Dorsolateral prefrontal cortex (tissue), 120 donors: ENCODE measurements at regions of chr6 and their contacts with region 1.

Region 1: GRCh38 chr6:124870611-124871459 is 91.4 kb upstream of the RNF217 start:
- DNase-seq: no peak
- H3K4me3 ChIP-seq: no peak overlapping the region
- H3K27ac ChIP-seq: no peak overlapping the region
- H3K27me3 ChIP-seq: no peaks in the 10 kb centered on the region
- CTCF ChIP-seq: peak; percentile 59 to 91 (median 78)

Region 2: DNA sequence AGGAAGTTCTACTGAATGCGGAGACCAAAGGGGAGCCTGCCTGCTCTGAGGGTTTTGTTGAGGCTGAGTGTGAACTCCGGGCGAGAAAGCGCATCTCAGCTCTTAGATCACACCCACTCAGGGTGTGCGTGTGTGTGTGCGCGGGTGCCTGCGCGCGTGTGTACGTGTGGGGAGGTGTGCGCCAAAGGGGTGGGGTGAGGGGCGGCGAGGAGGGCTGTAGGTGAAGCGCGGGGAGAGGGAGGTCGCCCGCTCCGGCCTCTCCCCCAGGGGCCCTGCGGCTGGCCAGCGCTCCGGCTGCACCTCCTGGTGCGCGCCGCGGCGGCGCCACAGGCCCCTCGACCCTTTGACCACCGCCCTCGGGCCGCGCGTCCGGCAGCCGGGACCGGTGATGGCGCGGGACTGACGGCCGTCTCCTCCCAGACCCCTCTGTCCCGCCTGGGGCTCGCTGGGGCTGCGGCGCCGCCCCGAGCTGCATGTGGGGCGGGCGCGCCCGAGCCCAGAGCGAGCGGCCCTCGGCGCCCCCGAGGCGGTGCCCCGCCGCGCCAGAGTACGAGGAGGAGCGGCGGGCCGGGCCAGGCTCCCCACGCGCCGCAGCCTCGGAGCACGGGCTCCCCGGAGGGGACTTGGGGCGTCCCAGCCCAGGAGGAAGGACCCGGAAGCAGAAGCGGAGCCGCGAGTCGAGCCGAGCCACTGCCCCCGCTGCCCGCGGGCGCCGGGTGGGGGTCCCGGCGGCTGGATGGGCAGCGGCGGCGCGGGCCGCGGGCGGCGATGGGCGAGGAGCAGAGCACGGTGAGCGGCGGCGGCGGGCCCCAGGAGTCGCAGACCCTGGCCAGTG is 91.2 kb after region 1 on chr6 and contains the start of gene RNF217:
- intact Hi-C with region 1: loop called in 1 of 2 experiments (anchors 5 kb)
- DNase-seq: peak; percentile 28 to 71 (median 56)
- H3K4me3 ChIP-seq: peak within 1 kb of the TSS; percentile 70 to 93 (median 84)
- H3K27ac ChIP-seq: peak within 1 kb of the TSS; percentile 69 to 96 (median 89)
- H3K27me3 ChIP-seq: no peaks in the 10 kb centered on the region
- CTCF ChIP-seq: peak in 5 of 56 donors; percentile 11 to 23 (median 17)
- total RNA-seq, gene RNF217: 13.2 to 35.6 (median 22.1) TPM

Region 3: GRCh38 chr6:125114248-125114858 is 243.5 kb after region 1 on chr6:
- intact Hi-C with region 1: loop called (anchors 2 to 5 kb)
- DNase-seq: peak in 3 of 10 donors; percentile 37 to 83 (median 75)
- H3K4me3 ChIP-seq: peak overlapping the region in 26 of 59 donors; percentile 9 to 49 (median 33)
- H3K27ac ChIP-seq: peak overlapping the region in 3 of 59 donors; percentile 5 to 29 (median 8)
- H3K27me3 ChIP-seq: no peaks in the 10 kb centered on the region
- CTCF ChIP-seq: peak; percentile 68 to 100 (median 90)

Region 4: GRCh38 chr6:125301435-125302391 is 430.9 kb after region 1 on chr6 and contains the start of gene HDDC2:
- intact Hi-C with region 1: loop called in 1 of 2 experiments (anchors 10 kb)
- DNase-seq: peak in 8 of 10 donors; percentile 17 to 73 (median 46)
- H3K4me3 ChIP-seq: peak within 1 kb of the TSS; percentile 59 to 92 (median 82)
- H3K27ac ChIP-seq: peak within 1 kb of the TSS in 57 of 59 donors; percentile 19 to 94 (median 83)
- H3K27me3 ChIP-seq: no peaks in the 10 kb centered on the region
- CTCF ChIP-seq: peak in 9 of 56 donors; percentile 8 to 36 (median 22)
- total RNA-seq, gene HDDC2: 55.3 to 170 (median 91.5) TPM

Region 5: DNA sequence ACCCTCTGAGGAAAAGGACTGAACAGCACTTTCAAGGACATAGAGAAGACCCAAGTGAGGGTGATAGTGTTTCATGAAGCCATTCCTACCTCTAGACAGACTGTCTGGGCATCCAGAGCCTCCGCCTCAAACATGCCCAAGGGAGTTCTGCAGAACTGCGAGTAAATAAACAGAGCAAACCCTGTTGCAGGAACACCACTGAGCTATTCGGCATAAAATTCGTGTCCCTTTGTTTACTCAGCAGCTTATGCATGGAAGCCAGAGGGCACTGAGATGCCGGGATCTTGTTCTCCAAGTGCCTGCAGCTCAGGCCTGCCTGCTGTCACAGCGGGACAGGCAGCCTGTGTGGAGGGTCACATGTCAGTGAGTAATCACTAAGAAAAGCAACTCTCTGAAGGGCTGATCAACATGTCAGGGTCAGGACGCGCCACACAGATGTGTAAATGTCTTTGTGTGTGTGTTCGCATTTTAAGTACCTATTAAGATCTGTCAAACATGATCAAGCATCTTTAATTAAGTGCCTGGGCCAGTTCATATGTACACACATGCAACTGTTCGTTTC is 713.7 kb after region 1 on chr6:
- intact Hi-C with region 1: loop called in 1 of 2 experiments (anchors 10 kb)
- DNase-seq: peak in 9 of 10 donors; percentile 59 to 87 (median 82)
- H3K4me3 ChIP-seq: peak overlapping the region in 10 of 59 donors; percentile 0 to 27 (median 22)
- H3K27ac ChIP-seq: peak overlapping the region in 50 of 59 donors; percentile 4 to 85 (median 58)
- H3K27me3 ChIP-seq: peaks cover 0 to 4% (median 0%) of the 10 kb centered on the region in 45 donors
- CTCF ChIP-seq: peak; percentile 24 to 82 (median 61)

Region 6: GRCh38 chr6:125764121-125764671 is 893.4 kb after region 1 on chr6:
- intact Hi-C with region 1: loop called in 1 of 2 experiments (anchors 5 kb)
- DNase-seq: no peak
- H3K4me3 ChIP-seq: no peak overlapping the region
- H3K27ac ChIP-seq: peak overlapping the region in 15 of 59 donors; percentile 6 to 45 (median 24)
- H3K27me3 ChIP-seq: peaks cover 0 to 6% (median 0%) of the 10 kb centered on the region in 45 donors
- CTCF ChIP-seq: no peak